Vagina (tissue), 2 donors: ENCODE measurements at regions of chr14 and their contacts with region 1.

Region 1: DNA sequence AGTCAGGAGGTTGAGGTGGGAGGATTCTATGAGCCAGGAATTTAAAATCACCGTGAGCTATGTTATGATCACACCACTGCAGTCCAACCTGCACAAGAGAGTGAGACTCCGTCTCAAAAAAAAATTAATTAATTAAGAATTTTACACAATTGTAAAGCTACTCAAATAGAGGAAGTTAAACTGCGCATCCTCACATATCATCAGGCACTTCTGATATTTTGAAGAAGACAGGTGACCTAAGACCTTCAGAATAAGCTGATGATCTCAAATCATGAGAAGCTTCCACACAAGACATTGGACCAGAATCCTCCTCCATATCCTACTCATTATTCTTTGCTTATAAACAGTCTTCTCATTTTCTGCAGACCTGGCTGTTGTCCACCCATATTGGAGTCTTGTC is 800.9 kb downstream of the TMEM121 start:
- DNase-seq: no peak
- H3K4me3 ChIP-seq: no peak overlapping the region
- H3K27ac ChIP-seq: no peak overlapping the region
- H3K4me1 ChIP-seq: no peaks in the 10 kb centered on the region
- H3K27me3 ChIP-seq: no peaks in the 10 kb centered on the region
- CTCF ChIP-seq: no peak
- POLR2A ChIP-seq: no peak

Region 2: GRCh38 chr14:106347890-106348755 is 20.9 kb after region 1 on chr14:
- intact Hi-C with region 1: loop called (anchors 2 kb)
- DNase-seq: peak in 1 of 2 donors; percentile 85
- H3K4me3 ChIP-seq: no peak overlapping the region
- H3K27ac ChIP-seq: no peak overlapping the region
- H3K4me1 ChIP-seq: no peaks in the 10 kb centered on the region
- H3K27me3 ChIP-seq: no peaks in the 10 kb centered on the region
- CTCF ChIP-seq: no peak
- POLR2A ChIP-seq: no peak